ENCODE measurements at regions of chr1 and their contacts with region 1.

Region 1: GRCh38 chr1:52636721-52637695 is 4.0 kb downstream of the SHISAL2A start:
- DNase-seq: peak; percentile 44 to 91 (median 78)
- ATAC-seq: peak; percentile 60
- H3K4me3 ChIP-seq: peak overlapping the region; percentile 27 to 31
- H3K4me3 Mint-ChIP-seq: peak overlapping the region; percentile 77
- H3K27ac ChIP-seq: peak overlapping the region; percentile 89 to 99
- H3K27ac Mint-ChIP-seq: peak overlapping the region; percentile 99
- H3K4me1 ChIP-seq: peaks cover 83% of the 10 kb centered on the region
- H3K4me1 Mint-ChIP-seq: peaks cover 80% of the 10 kb centered on the region
- H3K27me3 ChIP-seq: no peaks in the 10 kb centered on the region
- H3K27me3 Mint-ChIP-seq: no peaks in the 10 kb centered on the region
- CTCF ChIP-seq: no peak

Region 2: DNA sequence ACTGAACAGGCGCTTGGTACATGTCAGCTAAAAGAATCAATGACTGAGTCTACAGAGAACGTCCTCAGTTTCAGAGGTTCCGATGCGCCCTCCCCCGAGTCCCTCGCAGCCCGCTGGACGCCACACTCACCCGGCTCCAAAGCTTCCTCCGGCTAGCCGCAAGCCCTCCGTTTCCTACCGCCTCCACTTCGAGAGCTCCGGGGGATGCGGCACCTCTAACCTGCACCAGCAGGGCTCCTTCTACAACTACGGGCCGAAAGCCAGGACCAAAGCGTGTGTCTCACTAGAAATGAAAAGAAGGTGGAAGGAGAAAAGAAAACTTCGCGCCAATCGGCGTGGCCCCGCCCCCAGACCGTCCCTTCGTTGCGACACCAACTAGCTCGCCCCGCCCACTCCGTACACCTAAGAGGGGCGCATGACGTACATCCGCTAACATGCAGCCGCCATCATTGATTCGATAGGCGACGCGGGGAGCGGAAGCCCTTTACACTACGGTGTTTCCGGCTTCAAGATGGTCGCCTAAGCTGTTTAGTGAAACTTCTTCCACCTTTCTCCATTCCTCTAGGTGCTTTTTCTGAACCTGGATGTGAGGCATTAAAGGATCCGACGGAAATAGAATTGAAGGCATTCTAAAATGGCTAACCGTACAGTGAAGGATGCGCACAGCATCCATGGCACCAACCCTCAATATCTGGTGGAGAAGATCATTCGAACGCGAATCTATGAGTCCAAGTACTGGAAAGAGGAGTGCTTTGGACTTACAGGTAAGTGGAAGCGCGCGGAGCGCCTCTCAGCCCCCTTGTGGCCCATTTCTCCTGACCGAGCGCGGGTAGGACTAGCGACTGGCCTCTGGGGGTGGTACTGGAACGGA is 232.7 kb before region 1 on chr1 and contains the starts of genes ORC1 and PRPF38A:
- CTCF ChIA-PET with region 1: no interaction called
- POLR2A ChIA-PET with region 1: interaction called, 5 read pairs
- intact Hi-C with region 1: loop called (anchors 1 to 2 kb)
- DNase-seq: peak; percentile 94 to 99 (median 98)
- ATAC-seq: peak; percentile 92
- H3K4me3 ChIP-seq: peak within 1 kb of the TSS; percentile 87 to 92
- H3K4me3 Mint-ChIP-seq: peak within 1 kb of the TSS; percentile 99
- H3K27ac ChIP-seq: peak within 1 kb of the TSS; percentile 96
- H3K27ac Mint-ChIP-seq: peak within 1 kb of the TSS; percentile 98
- H3K4me1 ChIP-seq: peaks cover 26% of the 10 kb centered on the region
- H3K4me1 Mint-ChIP-seq: peaks cover 42% of the 10 kb centered on the region
- H3K27me3 ChIP-seq: no peaks in the 10 kb centered on the region
- H3K27me3 Mint-ChIP-seq: no peaks in the 10 kb centered on the region
- CTCF ChIP-seq: no peak
- total RNA-seq, gene ORC1: 1.2 to 1.3 TPM
- total RNA-seq, gene PRPF38A: 52.2 to 62.0 TPM

Region 3: DNA sequence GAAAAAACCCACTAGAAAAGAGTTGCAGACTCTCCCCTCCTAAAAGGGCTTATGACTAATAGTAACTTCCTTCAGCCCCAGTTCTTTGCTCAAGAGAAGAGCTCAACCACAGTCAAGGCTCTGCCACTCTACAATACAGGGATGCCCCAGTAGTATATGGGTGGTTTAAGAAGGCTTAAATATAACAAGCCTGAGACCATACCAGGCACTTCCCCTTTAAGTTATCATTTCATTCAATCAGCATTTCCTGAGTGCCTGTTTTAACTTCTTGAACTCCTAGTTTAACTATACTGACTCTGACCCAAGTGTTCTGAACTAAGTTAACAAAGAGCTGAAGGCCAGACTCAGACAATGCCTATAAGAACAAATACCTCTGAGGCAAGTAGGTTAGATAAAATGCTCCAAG is 212.8 kb before region 1 on chr1:
- CTCF ChIA-PET with region 1: interaction called, 6 read pairs
- POLR2A ChIA-PET with region 1: interaction called, 5 read pairs
- intact Hi-C with region 1: loop called (anchors 1 to 5 kb)
- DNase-seq: peak in 8 of 9 experiments; percentile 11 to 81 (median 46)
- ATAC-seq: peak; percentile 91
- H3K4me3 ChIP-seq: no peak overlapping the region
- H3K4me3 Mint-ChIP-seq: peak overlapping the region; percentile 44
- H3K27ac ChIP-seq: peak overlapping the region; percentile 60 to 72
- H3K27ac Mint-ChIP-seq: peak overlapping the region; percentile 99
- H3K4me1 ChIP-seq: peaks cover 44% of the 10 kb centered on the region
- H3K4me1 Mint-ChIP-seq: peaks cover 41% of the 10 kb centered on the region
- H3K27me3 ChIP-seq: no peaks in the 10 kb centered on the region
- H3K27me3 Mint-ChIP-seq: no peaks in the 10 kb centered on the region
- CTCF ChIP-seq: no peak

Region 4: GRCh38 chr1:52601991-52602855 is 34.8 kb before region 1 on chr1 and contains the start of gene GPX7:
- CTCF ChIA-PET with region 1: interaction called, 5 read pairs
- POLR2A ChIA-PET with region 1: interaction called, 14 read pairs
- intact Hi-C with region 1: loop called (anchors 1 to 2 kb)
- DNase-seq: peak; percentile 21 to 81 (median 66)
- ATAC-seq: peak; percentile 82
- H3K4me3 ChIP-seq: peak within 1 kb of the TSS; percentile 59 to 64
- H3K4me3 Mint-ChIP-seq: peak within 1 kb of the TSS; percentile 91
- H3K27ac ChIP-seq: peak within 1 kb of the TSS; percentile 71 to 73
- H3K27ac Mint-ChIP-seq: peak within 1 kb of the TSS; percentile 96
- H3K4me1 ChIP-seq: peaks cover 30% of the 10 kb centered on the region
- H3K4me1 Mint-ChIP-seq: peaks cover 52% of the 10 kb centered on the region
- H3K27me3 ChIP-seq: no peaks in the 10 kb centered on the region
- H3K27me3 Mint-ChIP-seq: no peaks in the 10 kb centered on the region
- CTCF ChIP-seq: no peak
- total RNA-seq, gene GPX7: 10.7 to 11.1 TPM

Region 5: GRCh38 chr1:52615489-52616042 is 21.4 kb before region 1 on chr1:
- CTCF ChIA-PET with region 1: interaction called, 4 read pairs
- POLR2A ChIA-PET with region 1: interaction called, 13 read pairs
- intact Hi-C with region 1: no loop called
- DNase-seq: no peak
- ATAC-seq: no peak
- H3K4me3 ChIP-seq: no peak overlapping the region
- H3K4me3 Mint-ChIP-seq: peak overlapping the region; percentile 11
- H3K27ac ChIP-seq: no peak overlapping the region
- H3K27ac Mint-ChIP-seq: peak overlapping the region; percentile 84
- H3K4me1 ChIP-seq: peaks cover 12% of the 10 kb centered on the region
- H3K4me1 Mint-ChIP-seq: peaks cover 34% of the 10 kb centered on the region
- H3K27me3 ChIP-seq: no peaks in the 10 kb centered on the region
- H3K27me3 Mint-ChIP-seq: no peaks in the 10 kb centered on the region
- CTCF ChIP-seq: no peak

Region 6: DNA sequence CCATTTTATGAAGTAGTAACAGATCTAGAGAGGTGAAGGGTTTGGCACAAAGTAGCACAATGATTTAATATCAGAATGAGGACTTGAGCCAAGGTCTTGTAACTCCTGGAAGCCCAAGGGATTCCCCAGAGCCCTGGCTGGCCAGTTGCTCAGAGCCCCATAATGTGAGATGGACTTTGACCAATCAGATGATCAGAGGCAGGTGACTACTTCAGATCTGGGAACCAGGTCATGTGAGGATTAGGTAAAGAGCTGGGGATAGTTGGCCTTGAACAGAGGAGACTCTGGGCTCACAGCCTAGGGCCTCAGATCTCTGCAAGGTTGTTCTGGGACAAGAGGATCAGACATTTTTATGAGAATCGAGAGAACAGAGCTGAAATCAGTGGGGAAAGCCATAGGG is 14.9 kb after region 1 on chr1:
- CTCF ChIA-PET with region 1: no interaction called
- POLR2A ChIA-PET with region 1: interaction called, 5 read pairs
- intact Hi-C with region 1: loop called in 1 of 2 experiments (anchors 1 kb)
- DNase-seq: no peak
- ATAC-seq: no peak
- H3K4me3 ChIP-seq: no peak overlapping the region
- H3K4me3 Mint-ChIP-seq: no peak overlapping the region
- H3K27ac ChIP-seq: no peak overlapping the region
- H3K27ac Mint-ChIP-seq: peak overlapping the region; percentile 79
- H3K4me1 ChIP-seq: no peaks in the 10 kb centered on the region
- H3K4me1 Mint-ChIP-seq: peaks cover 23% of the 10 kb centered on the region
- H3K27me3 ChIP-seq: no peaks in the 10 kb centered on the region
- H3K27me3 Mint-ChIP-seq: no peaks in the 10 kb centered on the region
- CTCF ChIP-seq: no peak